Spleen (tissue), 13 donors: ENCODE measurements at regions of chr9 and their contacts with region 1.

Region 1: GRCh38 chr9:115524453-115525059 is 406.6 kb upstream of the TNC start:
- DNase-seq: no peak
- H3K4me3 ChIP-seq: no peak overlapping the region
- H3K27ac ChIP-seq: no peak overlapping the region
- H3K4me1 ChIP-seq: peaks cover 0 to 4% (median 0%) of the 10 kb centered on the region in 6 donors
- H3K27me3 ChIP-seq: no peaks in the 10 kb centered on the region
- CTCF ChIP-seq: peak; percentile 24 to 73 (median 57)
- POLR2A ChIP-seq: no peak

Region 2: GRCh38 chr9:114681594-114682332 is 842.8 kb before region 1 on chr9 and contains the start of gene TEX48:
- intact Hi-C with region 1: loop called (anchors 10 kb)
- DNase-seq: peak; percentile 78
- H3K4me3 ChIP-seq: no peak within 1 kb of the TSS
- H3K27ac ChIP-seq: no peak within 1 kb of the TSS
- H3K4me1 ChIP-seq: peaks cover 0 to 8% (median 2%) of the 10 kb centered on the region in 6 donors
- H3K27me3 ChIP-seq: peaks cover 0 to 17% (median 0%) of the 10 kb centered on the region in 7 donors
- CTCF ChIP-seq: peak; percentile 48 to 71 (median 65)
- POLR2A ChIP-seq: no peak
- total RNA-seq, gene TEX48: not detected